ENCODE measurements at regions of chr2 and their contacts with region 1.

Region 1: DNA sequence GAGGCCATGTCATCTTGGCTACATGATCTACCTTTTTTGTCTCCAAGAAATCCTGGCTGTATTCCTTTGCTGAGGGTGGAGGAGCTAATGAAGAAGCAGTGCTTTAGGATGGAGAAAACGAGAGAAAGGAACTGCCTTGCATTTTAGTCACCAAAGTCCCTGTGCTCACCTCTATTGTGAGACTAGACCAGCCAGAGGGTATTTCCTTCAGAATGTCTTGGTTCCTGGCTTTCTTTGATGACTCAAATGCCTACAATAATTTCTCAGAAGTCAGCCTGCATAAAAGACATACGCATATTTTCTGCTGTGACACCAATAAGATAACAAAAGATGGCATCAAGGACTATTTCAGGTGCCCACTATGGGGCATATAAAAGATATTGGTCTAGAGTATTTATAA is 10.8 kb downstream of the SF3B6 start:
- DNase-seq: no peak
- H3K4me3 ChIP-seq: no peak overlapping the region
- CTCF ChIP-seq: no peak

Region 2: DNA sequence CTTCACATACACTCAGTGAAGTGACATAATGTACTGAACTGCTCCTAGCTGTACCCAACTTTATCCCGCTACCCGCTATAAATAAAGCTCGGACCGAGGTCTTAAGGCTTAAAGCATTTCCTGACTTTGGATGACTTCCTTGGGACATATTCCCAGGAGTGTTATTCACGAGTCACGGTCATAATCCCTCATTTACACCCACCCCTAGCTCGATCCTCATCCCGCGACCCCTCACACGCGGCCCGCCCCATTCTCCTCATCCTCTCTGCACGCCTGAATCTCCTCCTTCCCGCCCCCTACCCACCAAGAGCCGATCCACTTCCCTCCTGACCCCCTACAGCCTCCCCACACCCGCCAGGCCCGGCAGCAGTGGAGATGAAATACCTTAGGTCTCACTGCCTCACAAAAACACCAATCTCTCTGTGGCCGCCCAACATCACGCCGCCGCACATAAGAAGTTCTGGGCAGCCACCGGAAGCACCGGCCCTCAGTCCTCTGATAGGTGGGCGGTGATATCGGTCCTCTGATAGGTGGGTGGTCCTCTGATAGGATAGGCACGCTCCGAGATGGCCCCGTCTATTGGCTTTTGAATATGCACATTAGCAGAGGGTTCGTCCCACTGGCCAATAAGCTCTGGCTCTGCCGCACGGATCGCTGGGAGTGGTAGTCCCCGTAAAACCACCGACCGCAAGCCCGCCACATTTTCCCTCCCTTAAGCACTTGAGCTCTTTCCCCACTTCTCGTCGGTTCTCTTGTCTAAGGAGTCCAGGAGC is 18.2 kb before region 1 on chr2 and contains the start of gene WDCP:
- CTCF ChIA-PET with region 1: interaction called, 11 read pairs
- POLR2A ChIA-PET with region 1: no interaction called
- DNase-seq: peak; percentile 93
- H3K4me3 ChIP-seq: peak within 1 kb of the TSS; percentile 87
- CTCF ChIP-seq: no peak

Region 3: GRCh38 chr2:24075915-24076848 is 10.8 kb after region 1 on chr2 and contains the start of gene SF3B6:
- CTCF ChIA-PET with region 1: interaction called, 3 read pairs
- POLR2A ChIA-PET with region 1: interaction called, 11 read pairs
- DNase-seq: peak; percentile 88
- H3K4me3 ChIP-seq: peak within 1 kb of the TSS; percentile 97
- CTCF ChIP-seq: no peak

Measured in AG04449 (cell line).